ENCODE measurements at regions of chr13 and their contacts with region 1.

Region 1: GRCh38 chr13:80363890-80364503 is 23.1 kb upstream of the SPRY2 start:
- DNase-seq: peak in 3 of 42 donors; percentile 12 to 33 (median 13)

Region 2: GRCh38 chr13:79775830-79776229 is 588.2 kb before region 1 on chr13:
- intact Hi-C with region 1: loop called (anchors 10 kb)
- DNase-seq: peak in 40 of 42 donors; percentile 7 to 83 (median 56)